ENCODE measurements at regions of chr2 and their contacts with region 1.

Region 1: DNA sequence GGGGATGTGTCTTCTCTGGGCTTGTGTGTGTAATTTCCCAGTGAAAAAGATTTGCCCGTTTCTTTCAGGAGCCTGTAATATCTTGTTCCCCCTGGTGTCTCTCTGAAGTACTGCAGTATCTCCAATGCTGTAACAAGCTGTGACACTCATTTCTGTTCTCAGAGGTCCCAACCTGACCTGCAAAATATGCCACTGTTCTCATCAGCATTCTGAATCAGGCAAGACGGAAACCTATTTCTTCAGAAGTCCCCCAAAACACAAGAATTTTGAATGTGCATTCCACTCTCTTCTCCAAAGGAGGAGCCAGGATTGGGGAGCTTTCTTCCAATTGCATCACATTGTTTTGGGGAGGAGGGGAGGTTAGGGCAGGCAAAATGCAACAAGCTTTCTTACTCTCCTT is 77.0 kb upstream of the CNGA3 start:
- DNase-seq: peak; percentile 63
- H3K4me3 Mint-ChIP-seq: no peak overlapping the region
- H3K27ac Mint-ChIP-seq: peak overlapping the region; percentile 13
- H3K4me1 Mint-ChIP-seq: peaks cover 13% of the 10 kb centered on the region
- H3K27me3 Mint-ChIP-seq: no peaks in the 10 kb centered on the region
- CTCF ChIP-seq: peak; percentile 66

Region 2: DNA sequence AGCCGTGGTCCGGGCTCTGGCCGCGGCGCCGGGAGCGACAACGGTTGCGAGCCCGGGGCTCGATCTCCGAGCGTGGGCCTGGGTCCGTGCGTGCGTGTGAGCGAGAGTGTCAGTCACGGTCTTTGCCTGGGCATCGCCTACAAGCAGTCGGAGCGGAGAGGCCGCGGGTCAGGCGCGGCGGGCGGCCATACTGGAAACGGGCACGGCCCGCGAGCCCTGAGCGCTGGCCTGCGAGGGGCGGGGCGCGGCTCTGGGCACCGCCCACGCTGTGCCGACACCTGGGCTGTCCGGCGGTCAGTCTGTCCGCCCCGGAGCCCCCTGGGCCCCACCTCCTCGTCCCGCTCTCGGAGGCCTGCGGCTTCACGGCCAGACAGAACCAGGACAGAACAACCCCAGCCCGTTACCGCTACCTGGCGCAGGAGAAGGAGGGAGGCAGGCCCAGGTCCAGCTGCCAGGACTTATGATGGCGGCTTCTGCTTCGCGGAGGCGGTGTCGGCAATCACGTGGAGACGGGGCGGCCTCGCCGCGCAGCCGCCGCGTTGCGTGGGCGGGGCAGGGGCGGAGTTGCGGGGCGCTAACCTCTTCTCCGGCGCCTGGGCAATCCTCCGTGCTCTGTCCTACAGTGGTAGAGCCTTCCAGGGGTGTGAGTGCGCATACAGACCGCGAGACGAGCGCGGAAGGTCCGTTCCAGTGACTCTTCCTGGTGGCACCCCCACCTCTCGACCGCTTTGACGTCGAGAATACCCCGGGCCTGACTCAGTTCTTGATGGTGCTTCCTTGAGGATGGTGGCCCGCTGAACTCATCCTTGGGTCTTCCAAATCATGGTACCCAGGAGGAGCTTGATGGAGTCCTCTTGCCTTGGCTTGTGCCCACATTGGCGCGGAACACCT is 273.3 kb before region 1 on chr2 and contains the start of gene TMEM131:
- CTCF ChIA-PET with region 1: interaction called, 4 read pairs
- POLR2A ChIA-PET with region 1: no interaction called
- intact Hi-C with region 1: loop called (anchors 10 kb)
- DNase-seq: peak; percentile 92
- H3K4me3 Mint-ChIP-seq: peak within 1 kb of the TSS; percentile 87
- H3K27ac Mint-ChIP-seq: peak within 1 kb of the TSS; percentile 75
- H3K4me1 Mint-ChIP-seq: peaks cover 22% of the 10 kb centered on the region
- H3K27me3 Mint-ChIP-seq: no peaks in the 10 kb centered on the region
- CTCF ChIP-seq: no peak
- total RNA-seq, gene TMEM131: 42.2 and 42.8 TPM in 2 replicates

Region 3: GRCh38 chr2:98188351-98189049 is 80.8 kb before region 1 on chr2:
- CTCF ChIA-PET with region 1: interaction called, 10 read pairs
- POLR2A ChIA-PET with region 1: interaction called, 6 read pairs
- intact Hi-C with region 1: no loop called
- DNase-seq: peak; percentile 44
- H3K4me3 Mint-ChIP-seq: no peak overlapping the region
- H3K27ac Mint-ChIP-seq: no peak overlapping the region
- H3K4me1 Mint-ChIP-seq: no peaks in the 10 kb centered on the region
- H3K27me3 Mint-ChIP-seq: no peaks in the 10 kb centered on the region
- CTCF ChIP-seq: peak; percentile 32

Region 4: DNA sequence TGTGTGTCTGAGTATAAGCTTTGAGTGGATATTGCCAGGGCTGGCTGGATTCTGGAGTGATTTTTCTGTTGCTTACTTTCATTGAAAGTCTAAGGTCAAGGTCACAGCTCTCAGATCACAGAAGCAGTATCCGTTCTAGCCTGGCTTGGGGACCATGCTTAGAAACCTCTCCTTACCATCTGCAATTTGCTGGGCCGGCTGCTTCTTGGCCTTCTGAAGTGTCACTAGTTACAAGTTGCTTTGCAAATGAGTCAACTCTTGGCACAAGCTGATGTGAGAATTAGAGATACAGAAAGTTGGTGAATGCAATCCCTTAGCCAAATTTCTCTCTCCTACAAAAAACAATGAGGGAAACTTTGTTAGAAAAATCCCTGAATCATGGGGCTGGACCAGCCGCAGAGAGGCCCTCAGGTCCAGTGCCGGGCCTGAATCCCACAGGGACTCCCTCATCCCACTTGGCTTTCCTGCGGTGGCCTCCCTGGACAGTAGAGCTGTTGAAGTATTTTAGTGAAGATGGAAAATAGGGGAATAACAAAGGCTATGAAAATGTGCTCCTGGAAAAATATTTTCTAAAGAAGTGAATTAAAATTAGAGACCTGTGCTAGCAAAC is 15.7 kb before region 1 on chr2:
- CTCF ChIA-PET with region 1: interaction called, 15 read pairs
- POLR2A ChIA-PET with region 1: no interaction called
- intact Hi-C with region 1: no loop called
- DNase-seq: peak; percentile 4
- H3K4me3 Mint-ChIP-seq: no peak overlapping the region
- H3K27ac Mint-ChIP-seq: no peak overlapping the region
- H3K4me1 Mint-ChIP-seq: no peaks in the 10 kb centered on the region
- H3K27me3 Mint-ChIP-seq: peaks cover 16% of the 10 kb centered on the region
- CTCF ChIP-seq: no peak

Measured in MCF 10A (cell line).